Left ventricle myocardium superior (tissue), 1 donor: ENCODE measurements at regions of chr1 and their contacts with region 1.

Region 1: GRCh38 chr1:9129266-9130041 is 552 bp upstream of the GPR157 start:
- DNase-seq: peak; percentile 94
- ATAC-seq: peak; percentile 79

Region 2: DNA sequence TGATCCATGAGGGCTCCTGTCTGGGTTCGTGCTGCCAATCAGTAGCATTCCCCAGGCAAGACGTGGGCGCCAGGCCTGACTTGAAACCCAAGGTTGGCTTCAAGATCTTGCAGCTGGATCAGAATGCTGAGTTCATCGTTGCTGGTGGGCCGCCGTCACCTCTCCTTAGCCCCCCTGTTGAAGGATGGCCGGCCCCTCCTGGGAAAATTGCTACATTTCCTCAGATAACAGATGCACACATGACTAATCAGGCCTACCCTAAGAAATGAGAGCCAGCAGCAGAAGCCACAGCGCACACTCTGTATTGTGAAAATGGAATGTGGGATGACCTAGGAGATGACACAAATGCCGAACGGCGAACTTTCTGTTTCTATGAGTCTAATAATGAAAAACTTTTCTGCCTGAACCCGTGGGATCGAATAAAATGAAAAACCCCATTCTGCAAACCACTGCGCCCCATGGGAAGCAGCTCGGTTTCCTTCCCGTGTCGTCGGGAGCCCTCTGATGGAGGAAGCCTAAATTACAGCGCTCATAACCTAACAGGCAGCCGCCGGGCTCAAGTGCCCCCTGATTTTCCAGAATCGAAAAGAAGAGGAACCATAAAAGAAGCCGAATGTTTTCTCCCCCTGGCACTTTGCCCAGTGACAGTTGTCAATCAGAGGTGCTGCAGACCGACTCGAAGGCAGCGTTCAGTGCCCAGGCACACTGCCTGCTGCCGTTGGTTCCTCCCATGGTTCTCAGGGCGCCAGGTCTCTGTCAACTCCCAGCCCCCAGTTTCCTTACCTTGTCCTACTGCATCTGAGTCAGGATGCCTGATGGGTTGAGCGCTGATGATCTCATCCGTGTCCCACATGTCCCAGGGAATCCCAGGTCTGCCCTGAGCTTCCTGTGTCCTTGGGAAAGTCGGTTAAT is 66.9 kb after region 1 on chr1:
- intact Hi-C with region 1: loop called (anchors 10 kb)
- DNase-seq: peak; percentile 73
- ATAC-seq: peak; percentile 72